ENCODE measurements at regions of chr19 and their contacts with region 1.

Region 1: DNA sequence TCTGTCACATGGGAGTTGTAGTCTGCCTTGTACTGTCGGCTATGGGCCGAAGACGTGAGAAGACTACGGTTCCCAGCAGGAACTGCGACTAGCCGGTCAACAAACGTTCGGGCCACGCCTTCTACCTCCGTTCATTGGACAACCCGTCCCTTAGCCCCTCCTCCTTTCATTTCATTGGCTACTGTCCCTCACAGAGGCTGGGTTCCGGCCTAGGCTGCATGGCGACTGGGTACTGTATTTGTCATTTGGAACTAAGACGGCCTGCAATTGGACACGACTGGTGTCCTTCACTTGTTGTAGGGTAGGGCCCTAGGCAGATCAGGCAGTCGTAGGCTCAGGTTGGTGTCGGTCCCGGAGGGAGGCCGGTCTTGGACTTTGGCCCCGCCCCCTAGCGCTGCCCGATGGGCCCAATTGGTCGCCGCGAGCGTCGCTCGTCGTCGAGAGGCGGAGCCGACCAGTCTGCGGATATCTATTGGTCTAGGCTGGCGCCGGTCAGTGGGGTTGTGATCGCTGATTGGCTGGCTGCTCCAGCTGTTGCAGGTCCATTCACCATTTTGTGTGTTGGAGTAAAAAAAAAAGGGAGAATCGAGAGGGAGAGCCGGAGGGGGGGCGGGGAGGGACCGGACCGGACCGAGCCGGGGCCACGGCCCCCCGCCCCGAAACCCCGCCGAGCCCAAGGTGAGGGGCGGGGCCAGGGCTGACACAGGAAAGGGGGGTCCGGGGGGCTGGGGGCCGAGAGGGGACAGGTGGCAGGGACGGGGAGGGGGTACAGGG is at the start of gene CIC:
- DNase-seq: peak; percentile 97 to 100 (median 99)
- ATAC-seq: peak; percentile 70
- H3K4me3 ChIP-seq: peak within 1 kb of the TSS; percentile 70 to 83
- H3K4me3 Mint-ChIP-seq: peak within 1 kb of the TSS; percentile 86
- H3K27ac ChIP-seq: peak within 1 kb of the TSS; percentile 93 to 99
- H3K27ac Mint-ChIP-seq: peak within 1 kb of the TSS; percentile 97
- H3K4me1 ChIP-seq: peaks cover 29% of the 10 kb centered on the region
- H3K4me1 Mint-ChIP-seq: peaks cover 34% of the 10 kb centered on the region
- H3K27me3 ChIP-seq: no peaks in the 10 kb centered on the region
- H3K27me3 Mint-ChIP-seq: no peaks in the 10 kb centered on the region
- CTCF ChIP-seq: no peak
- total RNA-seq, gene CIC: 111 to 112 TPM

Region 2: GRCh38 chr19:41363753-41364523 is 905.0 kb before region 1 on chr19 and contains the start of gene B9D2:
- CTCF ChIA-PET with region 1: no interaction called
- POLR2A ChIA-PET with region 1: no interaction called
- intact Hi-C with region 1: loop called in 1 of 2 experiments (anchors 5 kb)
- DNase-seq: peak; percentile 95 to 99 (median 98)
- ATAC-seq: peak; percentile 89
- H3K4me3 ChIP-seq: peak within 1 kb of the TSS; percentile 80 to 81
- H3K4me3 Mint-ChIP-seq: peak within 1 kb of the TSS; percentile 98
- H3K27ac ChIP-seq: peak within 1 kb of the TSS; percentile 99 to 100
- H3K27ac Mint-ChIP-seq: peak within 1 kb of the TSS; percentile 100
- H3K4me1 ChIP-seq: peaks cover 27% of the 10 kb centered on the region
- H3K4me1 Mint-ChIP-seq: peaks cover 30% of the 10 kb centered on the region
- H3K27me3 ChIP-seq: no peaks in the 10 kb centered on the region
- H3K27me3 Mint-ChIP-seq: no peaks in the 10 kb centered on the region
- CTCF ChIP-seq: no peak
- total RNA-seq, gene B9D2: 19.6 to 25.9 TPM

Region 3: GRCh38 chr19:42254989-42255765 is 13.7 kb before region 1 on chr19 and contains the start of gene ERF:
- CTCF ChIA-PET with region 1: interaction called, 3 read pairs
- POLR2A ChIA-PET with region 1: interaction called, 7 read pairs
- intact Hi-C with region 1: loop called (anchors 1 kb)
- DNase-seq: peak; percentile 89 to 97 (median 93)
- ATAC-seq: peak; percentile 71
- H3K4me3 ChIP-seq: peak within 1 kb of the TSS; percentile 85 to 97
- H3K4me3 Mint-ChIP-seq: peak within 1 kb of the TSS; percentile 86
- H3K27ac ChIP-seq: peak within 1 kb of the TSS; percentile 96 to 97
- H3K27ac Mint-ChIP-seq: peak within 1 kb of the TSS; percentile 87
- H3K4me1 ChIP-seq: peaks cover 36% of the 10 kb centered on the region
- H3K4me1 Mint-ChIP-seq: peaks cover 27% of the 10 kb centered on the region
- H3K27me3 ChIP-seq: no peaks in the 10 kb centered on the region
- H3K27me3 Mint-ChIP-seq: no peaks in the 10 kb centered on the region
- CTCF ChIP-seq: no peak
- total RNA-seq, gene ERF: 92.1 to 95.1 TPM

Region 4: DNA sequence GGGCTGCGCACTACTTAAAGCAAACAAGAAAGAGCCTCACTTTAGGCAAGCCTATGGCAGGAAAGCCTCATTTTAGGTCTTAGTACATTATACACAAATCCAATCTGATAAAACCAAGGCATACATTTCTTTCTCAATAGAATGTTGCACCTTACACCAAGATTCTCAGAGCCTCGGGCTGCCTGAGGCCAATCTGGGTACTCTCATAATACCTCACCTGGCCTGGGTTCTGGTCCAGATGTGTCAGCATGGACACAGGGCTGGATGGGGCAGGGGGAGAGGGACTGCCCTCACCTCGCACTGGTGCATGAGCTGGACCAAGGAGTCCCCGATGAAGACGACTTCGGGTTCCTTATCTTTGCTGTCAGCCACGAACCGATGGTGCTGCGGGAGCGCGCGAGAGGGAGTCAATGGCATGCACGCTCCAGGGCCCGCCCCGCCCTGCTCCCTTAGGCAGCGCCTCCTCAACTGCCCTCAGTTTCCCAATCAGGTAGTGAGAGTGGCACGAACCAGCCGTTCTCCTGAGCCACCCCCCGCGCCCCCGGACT is 32.8 kb after region 1 on chr19 and contains the start of gene PRR19:
- CTCF ChIA-PET with region 1: no interaction called
- POLR2A ChIA-PET with region 1: no interaction called
- intact Hi-C with region 1: loop called in 1 of 2 experiments (anchors 1 kb)
- DNase-seq: peak in 1 of 9 experiments; percentile 46
- ATAC-seq: peak; percentile 5
- H3K4me3 ChIP-seq: peak within 1 kb of the TSS; percentile 88 to 89
- H3K4me3 Mint-ChIP-seq: peak within 1 kb of the TSS; percentile 87
- H3K27ac ChIP-seq: peak within 1 kb of the TSS; percentile 37 to 56
- H3K27ac Mint-ChIP-seq: peak within 1 kb of the TSS; percentile 49
- H3K4me1 ChIP-seq: peaks cover 19% of the 10 kb centered on the region
- H3K4me1 Mint-ChIP-seq: peaks cover 28% of the 10 kb centered on the region
- H3K27me3 ChIP-seq: no peaks in the 10 kb centered on the region
- H3K27me3 Mint-ChIP-seq: no peaks in the 10 kb centered on the region
- CTCF ChIP-seq: no peak
- total RNA-seq, gene PRR19: 0.19 TPM in 1 of 2 experiments, not detected in the other

Region 5: GRCh38 chr19:42440357-42441048 is 171.6 kb after region 1 on chr19:
- CTCF ChIA-PET with region 1: no interaction called
- POLR2A ChIA-PET with region 1: no interaction called
- intact Hi-C with region 1: no loop called
- DNase-seq: peak; percentile 69 to 88 (median 80)
- ATAC-seq: peak; percentile 43
- H3K4me3 ChIP-seq: no peak overlapping the region
- H3K4me3 Mint-ChIP-seq: no peak overlapping the region
- H3K27ac ChIP-seq: no peak overlapping the region
- H3K27ac Mint-ChIP-seq: peak overlapping the region; percentile 4
- H3K4me1 ChIP-seq: peaks cover 15% of the 10 kb centered on the region
- H3K4me1 Mint-ChIP-seq: peaks cover 20% of the 10 kb centered on the region
- H3K27me3 ChIP-seq: no peaks in the 10 kb centered on the region
- H3K27me3 Mint-ChIP-seq: no peaks in the 10 kb centered on the region
- CTCF ChIP-seq: peak; percentile 96

Region 6: GRCh38 chr19:42468273-42468796 is 199.4 kb after region 1 on chr19:
- CTCF ChIA-PET with region 1: no interaction called
- POLR2A ChIA-PET with region 1: no interaction called
- intact Hi-C with region 1: no loop called
- DNase-seq: no peak
- ATAC-seq: no peak
- H3K4me3 ChIP-seq: no peak overlapping the region
- H3K4me3 Mint-ChIP-seq: no peak overlapping the region
- H3K27ac ChIP-seq: no peak overlapping the region
- H3K27ac Mint-ChIP-seq: no peak overlapping the region
- H3K4me1 ChIP-seq: no peaks in the 10 kb centered on the region
- H3K4me1 Mint-ChIP-seq: peaks cover 4% of the 10 kb centered on the region
- H3K27me3 ChIP-seq: no peaks in the 10 kb centered on the region
- H3K27me3 Mint-ChIP-seq: no peaks in the 10 kb centered on the region
- CTCF ChIP-seq: no peak

Measured in CD8-positive, alpha-beta T cell (primary cell).